T-cell (primary cell): ENCODE measurements at regions of chr10 and their contacts with region 1.

Region 1: DNA sequence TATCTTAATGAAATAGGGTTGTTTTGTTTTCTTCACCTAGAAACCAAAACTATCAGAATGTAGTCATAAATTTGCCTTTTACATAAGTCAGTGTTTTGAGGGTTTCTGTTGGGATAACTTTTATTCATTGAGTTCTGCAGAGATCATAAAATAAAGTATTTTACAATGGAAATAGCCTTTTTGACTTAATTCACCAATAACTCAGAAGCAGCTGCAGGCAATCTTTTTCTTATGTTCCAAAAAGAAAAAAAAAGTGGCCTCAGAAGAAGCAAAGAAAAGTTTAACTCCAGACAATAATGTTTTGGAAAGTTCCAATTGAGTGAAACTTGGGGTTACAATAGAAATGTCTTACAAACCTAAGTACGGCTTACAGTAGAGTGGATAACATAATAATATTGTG is 491.7 kb upstream of the NRP1 start:
- DNase-seq: no peak
- ATAC-seq: no peak
- H3K4me3 ChIP-seq: no peak overlapping the region
- H3K4me3 Mint-ChIP-seq: no peak overlapping the region
- H3K27ac ChIP-seq: no peak overlapping the region
- H3K27ac Mint-ChIP-seq: no peak overlapping the region
- H3K4me1 ChIP-seq: no peaks in the 10 kb centered on the region
- H3K4me1 Mint-ChIP-seq: no peaks in the 10 kb centered on the region
- H3K27me3 ChIP-seq: no peaks in the 10 kb centered on the region
- H3K27me3 Mint-ChIP-seq: peaks cover 0 to 10% of the 10 kb centered on the region in 2 donors

Region 2: DNA sequence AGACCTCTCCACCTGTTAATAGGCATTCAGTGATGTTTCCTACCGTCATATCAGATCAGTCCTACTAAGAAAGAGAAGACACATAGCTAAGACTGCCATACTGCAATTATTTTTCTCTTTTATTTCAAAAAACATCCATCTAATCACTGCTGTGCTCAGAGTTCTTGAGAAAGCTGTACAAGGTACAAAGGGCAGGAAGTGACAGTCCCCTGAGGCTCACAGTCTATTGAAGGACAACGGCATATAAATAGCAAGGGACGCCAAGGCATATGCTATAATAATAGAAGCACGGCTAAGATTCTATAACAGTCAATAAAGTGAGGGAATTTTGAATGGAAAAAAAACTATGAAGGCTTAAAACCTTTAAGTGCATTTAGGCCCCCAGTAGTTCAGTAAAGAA is 76.4 kb before region 1 on chr10:
- CTCF ChIA-PET with region 1: no interaction called
- POLR2A ChIA-PET with region 1: no interaction called
- DNase-seq: no peak
- ATAC-seq: no peak
- H3K4me3 ChIP-seq: no peak overlapping the region
- H3K4me3 Mint-ChIP-seq: no peak overlapping the region
- H3K27ac ChIP-seq: no peak overlapping the region
- H3K27ac Mint-ChIP-seq: no peak overlapping the region
- H3K4me1 ChIP-seq: no peaks in the 10 kb centered on the region
- H3K4me1 Mint-ChIP-seq: no peaks in the 10 kb centered on the region
- H3K27me3 ChIP-seq: no peaks in the 10 kb centered on the region
- H3K27me3 Mint-ChIP-seq: peaks cover 0 to 5% of the 10 kb centered on the region in 2 donors

Region 3: DNA sequence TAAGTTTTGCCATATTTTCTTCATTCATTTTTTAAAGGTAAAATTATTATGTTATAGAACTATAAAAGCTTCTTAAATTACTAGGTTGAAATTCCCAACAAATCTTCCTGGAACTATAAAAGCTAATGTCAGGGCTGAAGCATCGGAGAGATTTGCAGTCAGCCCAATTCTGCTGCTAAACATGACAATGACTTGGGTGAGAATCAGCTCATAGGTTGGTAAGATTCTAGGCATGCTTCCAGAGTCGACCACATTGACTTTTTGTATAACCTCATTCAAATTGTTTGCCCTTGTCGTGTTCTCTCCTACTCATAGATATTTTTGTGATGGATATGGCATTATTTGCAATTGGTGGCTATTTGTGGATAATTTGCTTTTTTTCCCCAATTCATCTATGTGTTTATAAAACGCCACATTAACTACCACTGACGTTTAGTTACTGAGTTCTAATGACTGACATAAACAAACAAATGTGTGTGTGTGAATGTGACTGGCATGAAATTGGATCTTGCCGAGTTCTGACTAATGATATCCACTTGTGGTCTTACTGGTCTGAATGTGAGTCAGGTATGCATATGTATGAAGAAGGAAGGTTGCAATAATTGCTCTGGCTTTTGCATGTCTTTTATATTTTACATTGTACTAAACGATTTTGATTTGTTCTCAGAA is 409.1 kb after region 1 on chr10:
- CTCF ChIA-PET with region 1: no interaction called
- POLR2A ChIA-PET with region 1: no interaction called
- DNase-seq: no peak
- ATAC-seq: no peak
- H3K4me3 ChIP-seq: no peak overlapping the region
- H3K4me3 Mint-ChIP-seq: no peak overlapping the region
- H3K27ac ChIP-seq: no peak overlapping the region
- H3K27ac Mint-ChIP-seq: no peak overlapping the region
- H3K4me1 ChIP-seq: peaks cover 0 to 5% of the 10 kb centered on the region in 2 experiments
- H3K4me1 Mint-ChIP-seq: no peaks in the 10 kb centered on the region
- H3K27me3 ChIP-seq: no peaks in the 10 kb centered on the region
- H3K27me3 Mint-ChIP-seq: no peaks in the 10 kb centered on the region

Region 4: GRCh38 chr10:34346516-34347100 is 520.4 kb after region 1 on chr10:
- CTCF ChIA-PET with region 1: interaction called in 1 of 2 experiments, 16 read pairs
- POLR2A ChIA-PET with region 1: no interaction called
- DNase-seq: no peak
- ATAC-seq: no peak
- H3K4me3 ChIP-seq: no peak overlapping the region
- H3K4me3 Mint-ChIP-seq: no peak overlapping the region
- H3K27ac ChIP-seq: no peak overlapping the region
- H3K27ac Mint-ChIP-seq: no peak overlapping the region
- H3K4me1 ChIP-seq: no peaks in the 10 kb centered on the region
- H3K4me1 Mint-ChIP-seq: no peaks in the 10 kb centered on the region
- H3K27me3 ChIP-seq: no peaks in the 10 kb centered on the region
- H3K27me3 Mint-ChIP-seq: no peaks in the 10 kb centered on the region

Region 5: DNA sequence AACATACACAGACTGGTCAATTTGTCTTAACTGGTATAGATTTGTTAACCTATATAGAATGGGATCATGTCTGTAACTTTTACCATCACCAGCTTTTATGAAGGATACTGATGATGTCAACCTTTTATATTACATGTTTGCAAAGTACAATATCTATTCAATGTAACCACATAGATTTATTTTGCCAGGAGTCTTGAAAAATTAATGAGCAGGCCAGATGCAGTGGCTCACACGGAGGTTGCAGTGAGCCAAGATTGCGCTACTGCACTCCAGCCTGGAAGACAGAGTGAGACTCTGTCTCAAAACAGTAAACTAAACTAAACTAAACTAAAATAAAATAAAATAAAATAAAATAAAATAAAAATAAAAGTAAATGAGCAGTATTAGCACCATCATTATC is 1018.9 kb after region 1 on chr10:
- CTCF ChIA-PET with region 1: no interaction called
- POLR2A ChIA-PET with region 1: no interaction called
- DNase-seq: no peak
- ATAC-seq: no peak
- H3K4me3 ChIP-seq: no peak overlapping the region
- H3K4me3 Mint-ChIP-seq: no peak overlapping the region
- H3K27ac ChIP-seq: no peak overlapping the region
- H3K27ac Mint-ChIP-seq: no peak overlapping the region
- H3K4me1 ChIP-seq: no peaks in the 10 kb centered on the region
- H3K4me1 Mint-ChIP-seq: no peaks in the 10 kb centered on the region
- H3K27me3 ChIP-seq: peaks cover 0 to 3% of the 10 kb centered on the region in 2 experiments
- H3K27me3 Mint-ChIP-seq: peaks cover 10 to 13% of the 10 kb centered on the region in 2 donors